ENCODE measurements at regions of chr16 and their contacts with region 1.

Region 1: DNA sequence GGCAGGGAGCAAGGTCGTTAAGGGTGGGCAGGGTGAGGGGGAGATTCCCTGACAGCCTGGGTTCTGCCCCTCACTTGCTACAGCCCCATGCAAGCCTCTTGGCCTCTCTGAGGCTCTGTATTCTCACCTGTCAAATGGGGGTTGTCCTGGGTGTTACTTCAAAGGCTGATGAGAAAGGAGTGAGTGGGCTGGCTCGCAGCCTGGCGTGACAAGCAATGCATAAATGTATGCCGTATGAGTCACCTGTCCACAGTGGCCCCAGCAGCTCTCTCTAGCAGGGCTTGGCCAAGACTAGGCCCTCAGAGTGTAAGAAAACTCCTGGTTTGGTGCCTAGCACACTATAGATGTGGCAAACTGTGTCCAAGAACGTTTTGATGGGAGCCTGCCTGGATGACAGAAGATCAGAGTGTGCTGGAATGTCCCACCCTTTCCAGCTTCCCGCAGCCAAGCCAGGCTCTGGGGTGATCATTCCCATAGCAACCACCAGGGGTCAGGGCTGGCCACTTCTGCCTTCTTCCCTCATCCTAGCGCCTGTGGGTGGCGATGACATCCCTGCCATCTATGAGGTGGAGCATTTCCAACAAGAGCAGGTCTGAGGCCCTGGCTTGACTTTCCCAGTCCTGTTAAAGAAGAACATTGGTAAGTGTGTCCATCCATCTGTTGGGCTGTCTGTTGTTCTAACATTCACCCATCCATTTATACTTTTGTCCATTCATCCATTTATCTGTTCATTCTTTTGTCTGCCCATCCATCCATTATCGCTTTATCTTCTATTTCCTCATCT is 37.2 kb upstream of the ADGRG1 start:
- DNase-seq: peak; percentile 89
- H3K4me3 Mint-ChIP-seq: peak overlapping the region; percentile 40
- H3K27ac Mint-ChIP-seq: peak overlapping the region; percentile 90
- H3K4me1 Mint-ChIP-seq: peaks cover 32% of the 10 kb centered on the region
- H3K27me3 Mint-ChIP-seq: no peaks in the 10 kb centered on the region

Region 2: DNA sequence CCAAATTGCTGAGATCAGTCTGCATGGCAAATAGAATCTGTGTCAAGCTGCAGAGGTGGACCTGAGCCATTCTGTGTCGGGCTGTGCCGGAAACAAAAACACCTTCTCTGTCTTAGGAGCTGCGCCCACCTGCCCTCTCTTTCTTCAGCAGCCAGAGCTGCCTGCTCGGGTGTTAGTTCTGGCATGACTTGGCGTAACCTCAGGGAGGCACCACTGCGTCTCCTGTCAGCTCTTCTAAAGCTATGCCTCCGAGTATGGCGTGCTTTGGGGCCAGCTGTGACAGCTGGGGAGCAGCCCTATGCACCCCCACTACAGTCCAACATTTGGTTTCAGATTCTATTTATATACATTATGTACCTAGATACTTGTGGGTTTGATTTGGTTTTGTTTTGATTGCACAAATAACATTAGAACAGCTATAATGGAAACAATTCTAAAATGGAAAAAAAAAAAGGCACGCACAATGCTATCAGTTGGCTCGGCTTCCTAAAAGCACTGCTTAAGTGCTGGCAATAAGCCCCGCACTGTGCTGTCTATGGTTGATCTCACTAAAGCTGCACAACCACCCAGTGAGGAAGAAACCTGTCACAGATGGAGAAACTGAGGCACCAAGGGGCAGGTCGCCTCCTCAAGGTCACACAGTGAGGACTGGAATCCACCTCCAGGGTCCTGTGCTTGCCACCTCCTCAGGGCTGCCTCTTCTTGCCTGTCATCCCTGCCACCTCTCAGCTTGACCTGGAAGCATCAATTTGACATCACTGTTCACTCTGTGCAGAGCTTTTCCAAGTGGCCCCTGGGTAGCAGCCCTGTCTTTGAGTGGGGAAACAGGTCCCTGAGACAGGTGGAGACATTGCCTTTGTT is 18.5 kb after region 1 on chr16:
- CTCF ChIA-PET with region 1: interaction called, 45 read pairs
- intact Hi-C with region 1: loop called (anchors 1 kb)
- DNase-seq: peak; percentile 92
- H3K4me3 Mint-ChIP-seq: peak overlapping the region; percentile 45
- H3K27ac Mint-ChIP-seq: peak overlapping the region; percentile 86
- H3K4me1 Mint-ChIP-seq: peaks cover 40% of the 10 kb centered on the region
- H3K27me3 Mint-ChIP-seq: no peaks in the 10 kb centered on the region

Region 3: GRCh38 chr16:57628008-57628781 is 36.9 kb after region 1 on chr16 and contains the start of gene ADGRG1:
- CTCF ChIA-PET with region 1: interaction called, 5 read pairs
- intact Hi-C with region 1: loop called (anchors 1 kb)
- DNase-seq: peak; percentile 86
- H3K4me3 Mint-ChIP-seq: no peak within 1 kb of the TSS
- H3K27ac Mint-ChIP-seq: no peak within 1 kb of the TSS
- H3K4me1 Mint-ChIP-seq: peaks cover 12% of the 10 kb centered on the region
- H3K27me3 Mint-ChIP-seq: peaks cover 29% of the 10 kb centered on the region
- total RNA-seq, gene ADGRG1: 0.93 to 1.0 TPM

Region 4: GRCh38 chr16:57639172-57639887 is 48.1 kb after region 1 on chr16:
- CTCF ChIA-PET with region 1: interaction called, 11 read pairs
- intact Hi-C with region 1: no loop called
- DNase-seq: no peak
- H3K4me3 Mint-ChIP-seq: no peak overlapping the region
- H3K27ac Mint-ChIP-seq: no peak overlapping the region
- H3K4me1 Mint-ChIP-seq: peaks cover 2% of the 10 kb centered on the region
- H3K27me3 Mint-ChIP-seq: peaks cover 4% of the 10 kb centered on the region

Region 5: DNA sequence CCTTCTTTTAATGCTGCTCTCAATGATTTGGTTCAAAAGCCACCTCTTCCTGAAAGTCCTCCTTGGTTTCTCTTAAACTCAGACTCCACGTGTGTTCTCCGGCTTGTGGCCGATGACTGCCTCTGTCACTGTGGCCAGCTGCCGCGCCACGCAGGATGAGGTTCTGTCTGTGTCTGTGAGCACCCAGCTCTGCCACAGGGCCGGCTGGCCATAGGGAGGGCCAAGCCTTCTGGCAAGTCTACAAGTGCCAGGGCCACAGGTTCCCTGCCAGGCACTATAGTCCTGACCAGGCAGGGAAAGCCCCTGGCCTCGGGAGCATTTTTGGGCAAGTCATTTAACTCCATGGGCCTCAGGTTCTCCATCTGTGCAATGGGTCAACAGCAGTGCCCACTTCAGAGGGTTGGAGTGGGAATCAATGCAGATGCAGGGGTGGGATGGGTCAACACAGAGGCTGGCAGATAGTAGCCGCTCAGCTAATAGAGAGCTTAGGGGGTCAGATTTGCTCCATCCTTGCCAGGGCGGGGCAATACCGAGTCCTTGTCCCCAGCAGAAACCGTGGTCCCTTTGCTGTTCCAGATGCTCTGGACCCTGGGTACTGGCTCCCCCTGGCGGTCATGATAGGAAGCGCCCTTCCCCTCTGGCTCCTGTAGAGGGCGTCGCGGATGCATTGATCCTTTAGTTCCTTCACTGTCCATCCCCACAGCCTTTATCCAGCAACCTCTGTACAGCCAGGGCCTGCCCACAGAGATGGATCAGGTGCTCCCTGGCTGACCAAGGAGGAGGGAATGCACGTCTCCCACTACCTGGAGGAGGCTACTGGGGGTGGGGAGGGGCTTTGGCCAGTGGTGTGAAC is 57.5 kb after region 1 on chr16:
- CTCF ChIA-PET with region 1: interaction called, 94 read pairs
- intact Hi-C with region 1: loop called (anchors 1 kb)
- DNase-seq: peak; percentile 93
- H3K4me3 Mint-ChIP-seq: no peak overlapping the region
- H3K27ac Mint-ChIP-seq: peak overlapping the region; percentile 44
- H3K4me1 Mint-ChIP-seq: peaks cover 17% of the 10 kb centered on the region
- H3K27me3 Mint-ChIP-seq: no peaks in the 10 kb centered on the region

Region 6: GRCh38 chr16:57871456-57871855 is 280.2 kb after region 1 on chr16:
- CTCF ChIA-PET with region 1: no interaction called
- intact Hi-C with region 1: loop called (anchors 5 kb)
- DNase-seq: no peak
- H3K4me3 Mint-ChIP-seq: no peak overlapping the region
- H3K27ac Mint-ChIP-seq: no peak overlapping the region
- H3K4me1 Mint-ChIP-seq: peaks cover 5% of the 10 kb centered on the region
- H3K27me3 Mint-ChIP-seq: peaks cover 2% of the 10 kb centered on the region

Measured in activated naive CD4-positive, alpha-beta T cell treated with anti-CD3 and anti-CD28 coated beads for 36 hours (primary cell).